Posterior vena cava (tissue), 2 donors: ENCODE measurements at regions of chr15 and their contacts with region 1.

Region 1: DNA sequence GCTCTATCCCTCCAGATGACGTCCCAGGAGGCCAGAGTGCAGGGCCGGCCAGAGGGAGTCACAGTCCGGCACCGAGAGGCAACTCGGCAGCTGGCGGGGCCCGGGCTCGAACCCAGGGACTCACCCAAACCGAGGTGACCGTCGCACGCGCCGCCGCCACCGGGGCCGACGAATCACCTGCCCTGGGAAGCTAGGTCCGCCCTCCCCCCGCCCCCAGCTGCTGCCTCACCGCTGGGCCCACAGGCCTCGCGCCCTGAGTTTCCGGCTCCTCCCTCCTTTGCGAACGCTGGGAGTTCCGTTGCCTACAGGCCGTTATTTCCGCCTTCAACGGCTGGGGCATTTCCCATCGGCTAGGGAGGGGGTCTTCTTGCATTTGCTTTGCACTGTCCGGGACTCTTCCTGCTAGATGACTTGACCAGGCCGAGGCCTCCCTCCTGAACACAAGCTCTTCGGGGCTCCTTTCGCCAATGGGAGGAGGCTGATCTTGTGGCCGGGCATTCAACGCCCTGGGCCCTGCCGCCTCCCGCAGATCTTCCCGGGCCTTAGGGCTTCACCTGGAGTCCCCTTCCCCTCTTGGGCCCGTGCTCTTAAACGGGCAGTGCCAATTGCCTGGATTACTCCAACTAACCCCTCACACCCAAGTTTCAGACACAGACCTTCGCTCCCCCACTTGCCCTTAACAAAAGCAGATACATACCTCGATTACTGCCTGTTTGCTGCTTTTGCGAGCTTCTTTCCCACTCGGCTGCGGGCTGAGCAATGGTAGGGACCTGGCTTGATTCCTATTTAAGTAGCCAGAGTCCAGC is at the start of gene SNUPN:
- DNase-seq: peak; percentile 98
- total RNA-seq, gene SNUPN: 17.2 to 22.5 TPM

Region 2: DNA sequence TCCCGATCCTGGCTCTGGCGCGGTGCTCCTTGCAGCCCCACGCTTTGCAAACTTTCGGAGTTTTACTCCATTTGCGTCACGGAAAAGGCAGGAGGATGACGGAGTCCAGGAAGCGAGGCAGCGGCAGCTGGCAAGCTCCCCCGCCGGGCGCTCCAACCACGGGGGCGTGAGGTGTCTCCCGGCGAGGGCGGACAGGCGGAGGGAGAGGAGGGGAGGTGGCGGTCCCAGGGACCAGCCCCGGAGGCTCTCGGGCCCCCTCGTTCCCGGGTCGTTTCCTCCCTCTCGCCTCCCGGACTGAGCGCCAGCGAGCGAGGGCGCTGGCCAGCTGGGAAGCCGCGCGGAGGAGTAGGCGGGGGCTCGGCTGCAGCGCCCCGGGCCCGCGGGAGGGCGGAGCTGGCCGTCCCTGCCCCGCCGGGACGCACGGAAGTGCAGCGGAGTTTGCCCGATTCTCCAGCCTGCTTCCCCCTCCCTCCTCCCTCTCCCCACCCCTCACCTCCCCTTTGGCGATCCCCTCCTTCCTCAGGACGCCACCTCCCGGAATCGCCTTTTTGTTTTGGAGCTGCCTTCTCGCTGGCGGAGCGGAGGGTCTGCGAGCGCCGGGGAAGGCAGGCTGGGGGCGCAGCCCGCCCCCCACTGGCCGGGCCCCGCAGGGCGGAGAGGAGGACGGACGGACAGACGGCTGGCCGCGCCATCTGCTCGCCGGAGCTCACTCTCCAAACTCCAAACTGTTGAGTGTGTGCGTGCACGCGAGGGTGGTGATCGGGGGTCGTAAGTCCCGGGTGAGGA is 21.8 kb after region 1 on chr15 and contains the start of gene SNX33:
- intact Hi-C with region 1: loop called in 1 of 2 experiments (anchors 1 kb)
- DNase-seq: peak; percentile 96
- total RNA-seq, gene SNX33: 23.8 to 30.9 TPM

Region 3: DNA sequence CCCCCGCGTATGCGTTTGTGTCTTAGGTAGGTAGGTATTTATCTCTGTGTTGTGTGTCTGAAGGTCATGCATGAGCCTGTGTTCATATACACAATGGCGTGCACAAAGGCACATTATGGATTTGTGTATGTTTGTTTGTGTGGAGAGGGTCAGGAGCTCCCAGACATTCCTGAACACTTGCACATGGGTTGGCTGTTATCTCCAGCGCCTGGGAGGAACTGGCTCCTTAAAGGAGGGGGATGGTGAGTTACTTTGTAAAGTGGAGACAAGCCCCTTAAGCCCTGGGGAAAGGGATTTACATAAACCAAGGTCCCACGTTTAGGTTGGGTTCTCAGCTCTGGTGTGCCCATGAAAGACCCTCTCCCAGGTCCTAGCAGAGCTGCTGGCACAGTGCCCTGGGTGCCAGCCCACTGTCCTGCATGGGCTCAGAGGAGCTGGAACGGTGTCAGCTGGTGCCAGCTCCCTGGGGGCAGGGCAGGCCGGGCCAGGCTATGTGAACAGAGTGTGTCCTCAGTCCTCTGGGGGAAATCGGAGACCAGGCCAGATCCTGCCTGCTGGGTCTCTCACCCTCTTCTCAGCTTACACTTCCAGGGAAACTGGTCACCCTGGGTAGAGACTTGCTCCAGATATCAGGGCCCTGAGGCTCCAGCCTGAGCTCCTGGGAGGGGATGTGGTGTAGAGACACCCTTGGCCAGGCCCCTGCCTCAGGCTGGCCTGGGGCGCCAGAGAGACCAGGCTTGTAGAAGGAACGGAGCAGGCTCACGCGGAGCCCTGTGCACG is 47.1 kb after region 1 on chr15:
- intact Hi-C with region 1: loop called in 1 of 2 experiments (anchors 10 kb)
- DNase-seq: no peak